ENCODE measurements at regions of chr16 and their contacts with region 1.

Region 1: DNA sequence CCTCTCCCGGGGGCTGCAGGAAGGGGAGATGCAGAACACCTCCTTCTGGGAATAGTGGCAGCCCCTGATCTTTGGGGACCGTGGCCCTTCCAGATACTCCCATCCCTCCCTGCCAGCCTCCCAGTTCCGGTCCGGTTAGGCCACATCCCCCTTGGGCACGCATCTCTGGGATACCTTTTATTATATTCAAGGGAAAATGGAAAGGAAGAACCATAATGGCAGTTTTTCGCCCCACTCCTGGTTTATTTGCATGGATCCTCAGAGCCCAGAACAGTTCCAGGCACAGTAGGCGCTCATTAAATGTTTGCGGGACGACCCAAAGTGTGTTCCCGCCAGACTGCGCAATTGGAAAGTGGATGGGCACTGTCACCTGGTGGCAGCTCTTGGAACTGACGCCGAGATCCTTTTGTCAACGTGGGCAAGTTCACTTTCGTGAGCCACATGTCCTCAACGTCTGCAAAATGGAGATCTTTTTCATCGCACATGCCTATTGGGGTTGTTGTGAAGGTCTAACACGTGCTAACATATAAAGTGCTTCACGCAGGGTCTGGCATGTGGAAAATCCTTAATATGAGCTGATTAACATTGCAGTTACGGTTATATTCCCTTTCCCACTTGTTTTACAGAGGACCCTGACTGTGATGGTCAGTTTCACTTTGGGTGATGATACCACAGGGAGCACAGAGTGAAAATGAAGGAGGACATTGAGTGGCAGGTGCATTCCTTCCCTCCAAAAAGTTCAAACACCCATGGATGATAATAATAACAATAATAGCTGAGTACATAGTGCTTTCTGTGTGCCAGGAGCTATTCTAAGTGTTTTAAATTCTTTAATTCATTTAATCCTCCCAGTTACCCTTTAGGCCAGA is 1.7 kb upstream of the GPRC5B start:
- DNase-seq: peak; percentile 76 to 91 (median 84)
- H3K4me3 ChIP-seq: peak overlapping the region in 56 of 59 donors; percentile 1 to 95 (median 82)
- H3K27ac ChIP-seq: peak overlapping the region; percentile 40 to 99 (median 96)
- H3K27me3 ChIP-seq: no peaks in the 10 kb centered on the region
- CTCF ChIP-seq: peak; percentile 99 to 100 (median 100)

Region 2: DNA sequence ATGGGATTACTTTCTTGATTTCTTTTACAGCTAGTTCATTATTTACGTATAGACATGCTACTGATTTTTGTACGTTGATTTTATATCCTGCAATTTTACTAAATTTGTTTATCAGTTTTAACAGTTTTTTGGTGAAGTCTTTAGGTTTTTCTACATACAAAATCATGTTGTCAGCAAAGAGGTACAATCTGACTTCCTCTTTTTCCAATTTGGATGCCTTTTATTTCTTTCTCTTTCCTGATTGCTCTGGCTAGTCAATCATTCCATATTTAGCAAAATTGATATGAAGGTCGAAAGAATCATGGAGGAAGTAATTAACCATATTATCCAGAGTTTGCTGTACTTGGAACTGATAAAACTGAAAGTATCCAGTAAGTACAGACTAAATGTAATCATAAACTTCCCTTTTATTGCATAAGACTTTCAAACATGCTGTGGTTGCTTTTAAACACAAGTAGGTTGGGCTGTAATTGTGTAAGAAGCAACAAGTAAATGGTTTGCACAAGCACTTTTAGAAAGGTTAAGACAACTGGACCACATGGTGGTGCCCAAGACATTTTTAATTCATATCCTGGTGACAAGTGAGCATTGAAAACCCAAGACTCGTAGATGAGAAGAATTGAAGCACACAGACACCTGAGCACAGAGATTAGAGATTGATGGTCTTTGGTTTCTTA is 372.8 kb before region 1 on chr16:
- intact Hi-C with region 1: loop called in 1 of 2 experiments (anchors 5 kb)
- DNase-seq: no peak
- H3K4me3 ChIP-seq: no peak overlapping the region
- H3K27ac ChIP-seq: peak overlapping the region in 10 of 59 donors; percentile 2 to 31 (median 16)
- H3K27me3 ChIP-seq: no peaks in the 10 kb centered on the region
- CTCF ChIP-seq: peak in 2 of 56 donors; percentile 10 to 12

Region 3: DNA sequence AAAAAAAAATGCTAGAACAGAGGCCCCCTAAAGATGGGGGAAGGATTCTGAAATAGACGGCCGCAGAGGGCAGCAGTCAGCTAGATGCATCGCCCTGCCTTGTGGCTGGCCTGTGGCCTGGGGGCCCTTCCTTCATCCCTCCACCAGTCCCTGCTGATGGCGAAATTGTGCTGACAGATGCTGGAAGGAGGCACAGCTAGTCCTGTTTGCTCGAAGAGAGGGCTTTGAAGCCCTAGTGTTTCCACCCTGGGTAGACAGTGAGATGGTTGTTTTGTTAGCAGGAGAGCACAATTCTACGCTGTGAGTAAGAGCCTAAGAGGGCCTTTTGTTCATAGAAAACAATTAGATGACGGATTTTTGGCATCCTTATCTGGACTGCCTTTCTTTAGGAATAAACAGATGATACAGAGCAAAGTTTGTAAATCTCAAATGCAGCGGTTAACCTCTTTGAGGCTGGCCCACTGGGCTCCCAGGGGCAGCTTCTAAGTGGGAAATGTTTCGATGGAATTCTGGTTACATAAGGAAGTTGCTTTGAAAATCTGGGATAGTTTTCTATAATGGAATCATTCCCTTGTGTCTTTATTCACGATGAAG is 307.8 kb before region 1 on chr16:
- intact Hi-C with region 1: loop called (anchors 5 kb)
- DNase-seq: peak; percentile 17 to 95 (median 90)
- H3K4me3 ChIP-seq: peak overlapping the region in 21 of 59 donors; percentile 5 to 41 (median 19)
- H3K27ac ChIP-seq: peak overlapping the region; percentile 73 to 100 (median 97)
- H3K27me3 ChIP-seq: no peaks in the 10 kb centered on the region
- CTCF ChIP-seq: peak in 55 of 56 donors; percentile 25 to 75 (median 55)

Region 4: GRCh38 chr16:19659554-19659953 is 226.8 kb before region 1 on chr16:
- intact Hi-C with region 1: loop called (anchors 2 to 5 kb)
- DNase-seq: peak in 2 of 10 donors; percentile 39 to 62
- H3K4me3 ChIP-seq: no peak overlapping the region
- H3K27ac ChIP-seq: peak overlapping the region in 45 of 59 donors; percentile 2 to 96 (median 75)
- H3K27me3 ChIP-seq: no peaks in the 10 kb centered on the region
- CTCF ChIP-seq: peak in 49 of 56 donors; percentile 10 to 69 (median 42)

Region 5: GRCh38 chr16:19717771-19718602 is 168.3 kb before region 1 on chr16 and contains the starts of genes IQCK and KNOP1:
- intact Hi-C with region 1: loop called in 1 of 2 experiments (anchors 2 kb)
- DNase-seq: peak; percentile 77 to 93 (median 88)
- H3K4me3 ChIP-seq: peak within 1 kb of the TSS; percentile 64 to 100 (median 95)
- H3K27ac ChIP-seq: peak within 1 kb of the TSS in 56 of 59 donors; percentile 7 to 87 (median 72)
- H3K27me3 ChIP-seq: no peaks in the 10 kb centered on the region
- CTCF ChIP-seq: peak in 19 of 56 donors; percentile 6 to 41 (median 23)
- total RNA-seq, gene IQCK: 13.2 to 40.2 (median 23.3) TPM
- total RNA-seq, gene KNOP1: 13.0 to 94.8 (median 30.2) TPM

Region 6: DNA sequence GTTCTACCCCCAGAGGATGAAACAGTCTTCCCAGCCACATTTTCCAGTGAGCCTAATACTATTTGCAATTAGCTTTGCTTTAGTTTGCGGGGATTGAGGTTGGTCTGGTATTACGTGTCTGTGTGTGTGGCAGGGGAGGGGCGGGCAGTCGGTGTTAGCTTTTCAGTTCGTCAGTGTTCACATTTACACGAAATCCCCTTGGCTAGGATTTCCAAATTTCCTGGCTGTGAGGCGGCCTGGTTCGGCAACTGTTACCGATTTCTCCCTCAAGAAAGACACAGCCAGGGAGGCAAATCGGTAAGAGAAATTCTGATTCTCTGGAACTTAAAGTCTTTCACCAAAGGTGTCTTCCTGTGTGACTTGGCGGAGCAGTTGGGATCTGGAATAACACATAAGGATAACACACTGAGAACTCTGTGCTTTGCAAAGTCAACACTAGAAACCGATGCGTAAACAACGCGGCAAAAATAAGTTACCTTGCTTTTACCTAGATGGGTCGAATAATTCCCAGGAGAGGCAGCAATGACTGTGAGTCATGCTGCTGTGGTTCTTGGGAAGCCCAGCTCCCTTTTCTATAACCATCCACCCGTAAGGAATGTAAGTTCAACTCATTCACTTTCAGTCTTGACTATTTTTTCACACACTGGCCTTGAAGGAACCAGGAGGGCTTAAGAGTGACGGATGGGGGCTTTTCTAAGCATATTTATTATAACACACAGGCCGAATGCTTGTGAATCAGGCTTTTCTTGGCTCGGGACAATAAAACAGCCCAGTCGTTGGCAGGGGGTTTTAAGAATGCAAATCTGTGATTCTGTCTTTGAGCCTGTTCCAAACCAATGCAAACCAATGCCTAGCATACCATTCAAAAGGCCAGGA is 25.9 kb before region 1 on chr16:
- intact Hi-C with region 1: loop called in 1 of 2 experiments (anchors 2 kb)
- DNase-seq: peak in 3 of 10 donors; percentile 26 to 29 (median 26)
- H3K4me3 ChIP-seq: peak overlapping the region in 51 of 59 donors; percentile 10 to 60 (median 40)
- H3K27ac ChIP-seq: peak overlapping the region; percentile 43 to 99 (median 97)
- H3K27me3 ChIP-seq: no peaks in the 10 kb centered on the region
- CTCF ChIP-seq: no peak

Measured in dorsolateral prefrontal cortex (tissue), 120 donors.